A673 (cell line): ENCODE measurements at regions of chr18 and their contacts with region 1.

Region 1: GRCh38 chr18:40935423-40935822 is 1019.6 kb upstream of the PIK3C3 start:
- DNase-seq: peak; percentile 66
- H3K4me3 ChIP-seq: no peak overlapping the region
- H3K27ac ChIP-seq: no peak overlapping the region
- H3K4me1 ChIP-seq: no peaks in the 10 kb centered on the region
- H3K27me3 ChIP-seq: peaks cover 5% of the 10 kb centered on the region
- CTCF ChIP-seq: peak; percentile 64

Region 2: GRCh38 chr18:40094441-40094840 is 841.0 kb before region 1 on chr18:
- CTCF ChIA-PET with region 1: no interaction called
- POLR2A ChIA-PET with region 1: interaction called, 23 read pairs
- intact Hi-C with region 1: no loop called
- DNase-seq: no peak
- H3K4me3 ChIP-seq: no peak overlapping the region
- H3K27ac ChIP-seq: no peak overlapping the region
- H3K4me1 ChIP-seq: no peaks in the 10 kb centered on the region
- H3K27me3 ChIP-seq: peaks cover 37% of the 10 kb centered on the region
- CTCF ChIP-seq: no peak

Region 3: DNA sequence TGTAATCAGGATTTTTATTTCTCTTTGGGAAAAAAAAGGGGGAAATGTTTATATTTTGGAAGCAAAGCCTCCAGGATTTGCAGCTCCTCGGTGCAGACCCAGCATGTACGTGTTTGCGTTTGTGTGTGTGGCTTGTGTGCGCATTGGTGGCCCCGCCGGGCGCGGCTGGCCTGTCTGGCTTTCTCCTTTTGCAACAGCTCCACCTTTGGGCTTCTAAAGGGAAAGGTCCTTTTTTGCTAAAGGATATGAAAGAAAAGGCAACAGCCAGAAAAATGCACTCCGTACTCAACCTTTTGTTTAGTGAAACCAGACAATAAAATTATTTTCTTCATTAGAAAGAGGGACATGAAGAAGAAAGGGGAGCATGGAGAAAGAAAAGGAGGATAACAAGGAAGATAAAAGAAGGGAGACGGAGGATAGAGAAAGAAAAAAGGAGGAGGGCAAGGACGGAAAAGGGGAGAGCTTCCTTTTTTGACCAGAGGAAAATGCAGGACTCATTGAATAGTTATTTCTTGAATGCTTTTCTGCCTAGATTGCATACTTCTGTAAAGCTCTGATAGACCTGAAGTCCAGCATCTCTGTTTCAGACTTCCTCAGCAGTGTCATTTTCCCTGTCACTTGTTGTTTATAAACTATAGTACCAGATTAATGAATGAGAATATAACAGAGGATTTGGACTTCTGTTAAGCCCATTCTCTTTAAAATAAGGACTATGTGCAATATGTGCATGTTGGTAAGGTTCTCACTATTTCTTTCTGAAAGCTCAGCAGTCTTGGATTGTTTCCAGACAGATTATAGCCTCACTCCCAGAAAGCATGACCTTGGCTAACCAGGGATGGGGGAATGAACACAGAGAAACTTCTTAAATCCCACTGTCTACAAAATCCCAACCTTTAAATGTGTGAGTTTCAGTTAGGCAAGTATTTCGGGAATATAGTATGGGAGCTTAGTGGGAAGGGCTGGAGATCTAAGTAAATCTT is 456.5 kb after region 1 on chr18:
- CTCF ChIA-PET with region 1: interaction called, 4 read pairs
- POLR2A ChIA-PET with region 1: no interaction called
- intact Hi-C with region 1: loop called (anchors 10 kb)
- DNase-seq: peak; percentile 66
- H3K4me3 ChIP-seq: no peak overlapping the region
- H3K27ac ChIP-seq: no peak overlapping the region
- H3K4me1 ChIP-seq: no peaks in the 10 kb centered on the region
- H3K27me3 ChIP-seq: peaks cover 27% of the 10 kb centered on the region
- CTCF ChIP-seq: peak; percentile 69

Region 4: GRCh38 chr18:41906528-41907146 is 971.2 kb after region 1 on chr18:
- CTCF ChIA-PET with region 1: no interaction called
- POLR2A ChIA-PET with region 1: no interaction called
- intact Hi-C with region 1: loop called (anchors 5 kb)
- DNase-seq: peak; percentile 55
- H3K4me3 ChIP-seq: no peak overlapping the region
- H3K27ac ChIP-seq: no peak overlapping the region
- H3K4me1 ChIP-seq: no peaks in the 10 kb centered on the region
- H3K27me3 ChIP-seq: no peaks in the 10 kb centered on the region
- CTCF ChIP-seq: peak; percentile 78